ENCODE measurements at regions of chr11 and their contacts with region 1.

Region 1: GRCh38 chr11:20363500-20364411 is at the start of gene HTATIP2:
- DNase-seq: no peak
- ATAC-seq: peak; percentile 80
- H3K4me3 ChIP-seq: peak within 1 kb of the TSS; percentile 55 to 62
- H3K27ac ChIP-seq: peak within 1 kb of the TSS; percentile 95
- H3K4me1 ChIP-seq: peaks cover 26 to 58% of the 10 kb centered on the region in 2 experiments
- H3K27me3 ChIP-seq: no peaks in the 10 kb centered on the region
- CTCF ChIP-seq: no peak
- POLR2A ChIP-seq: peak; percentile 25
- RAD21 ChIP-seq: no peak
- total RNA-seq, gene HTATIP2: 43.4 TPM

Region 2: DNA sequence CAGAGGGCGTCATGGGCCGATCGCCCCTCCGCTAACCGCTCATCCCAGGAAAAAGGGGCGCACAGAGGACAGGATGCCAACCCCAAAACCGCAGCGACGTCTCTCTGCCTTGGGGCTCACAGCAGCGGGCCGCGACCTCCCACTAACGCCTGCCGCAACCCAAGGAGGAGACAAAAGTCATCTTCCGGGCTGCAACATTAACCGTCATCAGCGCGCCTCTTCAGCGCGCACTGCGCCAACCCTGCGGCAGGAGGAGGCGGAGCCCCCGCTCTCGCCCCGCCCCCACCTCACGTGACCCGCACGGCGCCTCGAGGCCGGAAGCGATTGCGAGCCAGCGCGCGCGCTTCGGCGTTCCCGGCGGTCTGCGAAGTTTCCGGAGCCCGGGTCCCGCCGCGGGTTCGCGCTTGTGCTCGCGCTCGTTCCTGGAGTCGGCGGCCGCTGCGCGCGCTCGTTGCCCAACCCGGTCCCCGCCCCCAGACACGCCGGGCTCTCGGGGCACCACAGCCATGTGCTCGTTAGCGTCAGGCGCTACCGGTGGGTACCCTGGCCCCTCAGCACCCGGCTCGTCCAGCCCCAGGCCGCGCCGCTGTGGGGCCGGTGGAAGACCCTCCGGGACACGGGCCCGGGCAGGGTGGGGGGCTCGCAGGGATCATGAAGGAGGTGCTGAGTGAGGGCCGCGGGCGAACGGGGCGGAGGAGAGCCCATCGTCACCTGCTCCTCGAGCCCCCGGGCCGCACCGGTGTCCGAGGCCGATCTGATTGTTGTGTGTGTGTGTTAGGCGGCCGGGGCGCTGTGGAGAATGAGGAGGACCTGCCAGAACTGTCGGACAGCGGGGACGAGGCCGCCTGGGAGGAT is 23.7 kb after region 1 on chr11 and contains the start of gene PRMT3:
- CTCF ChIA-PET with region 1: interaction called, 3 read pairs
- POLR2A ChIA-PET with region 1: no interaction called
- RAD21 ChIA-PET with region 1: no interaction called
- intact Hi-C with region 1: loop called (anchors 1 kb)
- DNase-seq: peak; percentile 84
- ATAC-seq: peak; percentile 90
- H3K4me3 ChIP-seq: peak within 1 kb of the TSS; percentile 90 to 99
- H3K27ac ChIP-seq: peak within 1 kb of the TSS; percentile 82
- H3K4me1 ChIP-seq: peaks cover 5 to 9% of the 10 kb centered on the region in 2 experiments; a peak in 3 of 4 replicates
- H3K27me3 ChIP-seq: no peaks in the 10 kb centered on the region
- CTCF ChIP-seq: peak in 2 of 3 experiments; percentile 85 to 95; a peak in 3 of 6 replicates
- POLR2A ChIP-seq: peak; percentile 67
- RAD21 ChIP-seq: peak; percentile 51
- total RNA-seq, gene PRMT3: 24.3 TPM